Adrenal gland (tissue), 19 donors: ENCODE measurements at regions of chr7 and their contacts with region 1.

Region 1: GRCh38 chr7:15709978-15710377 is 23.5 kb upstream of the MEOX2 start:
- DNase-seq: no peak
- H3K4me3 ChIP-seq: no peak overlapping the region
- H3K27ac ChIP-seq: no peak overlapping the region
- H3K4me1 ChIP-seq: no peaks in the 10 kb centered on the region
- H3K27me3 ChIP-seq: no peaks in the 10 kb centered on the region
- CTCF ChIP-seq: no peak
- POLR2A ChIP-seq: no peak

Region 2: DNA sequence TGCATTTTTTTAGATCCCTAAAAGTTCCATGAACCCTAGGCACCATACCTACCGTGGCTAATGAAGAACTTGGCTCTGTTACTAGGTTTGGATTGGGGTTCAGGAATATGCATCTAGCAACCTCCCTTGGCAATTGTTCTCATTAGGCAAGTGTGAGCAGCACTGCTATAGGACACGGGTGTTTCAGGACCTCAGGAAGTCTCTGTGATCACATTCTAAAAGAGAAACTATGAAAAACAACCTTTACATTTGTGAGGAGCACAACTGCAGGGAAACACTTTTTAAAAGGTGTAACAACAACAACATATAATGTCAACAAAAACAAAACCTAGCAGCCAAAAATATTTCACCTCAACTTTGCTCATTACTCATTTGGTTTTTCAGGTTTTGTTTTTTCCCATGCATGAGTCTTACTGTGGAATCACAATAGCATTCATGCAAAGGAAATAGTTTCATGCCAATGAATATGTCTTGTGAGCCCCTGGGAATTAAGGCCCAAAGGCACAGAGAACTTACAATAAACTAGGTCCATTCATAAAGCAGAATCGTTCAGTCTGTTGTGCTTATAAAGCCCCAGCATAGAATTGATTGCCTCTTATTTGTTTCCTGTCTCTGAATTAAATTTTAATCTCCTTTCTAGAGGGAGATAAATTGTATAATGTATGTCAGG is 551.7 kb before region 1 on chr7:
- intact Hi-C with region 1: no loop called
- DNase-seq: no peak
- H3K4me3 ChIP-seq: no peak overlapping the region
- H3K27ac ChIP-seq: no peak overlapping the region
- H3K4me1 ChIP-seq: no peaks in the 10 kb centered on the region
- H3K27me3 ChIP-seq: no peaks in the 10 kb centered on the region
- CTCF ChIP-seq: no peak
- POLR2A ChIP-seq: no peak

Region 3: GRCh38 chr7:16071246-16071857 is 361.4 kb after region 1 on chr7:
- intact Hi-C with region 1: loop called in 1 of 2 experiments (anchors 10 kb)
- DNase-seq: peak in 2 of 7 donors; percentile 7 to 11
- H3K4me3 ChIP-seq: no peak overlapping the region
- H3K27ac ChIP-seq: no peak overlapping the region
- H3K4me1 ChIP-seq: no peaks in the 10 kb centered on the region
- H3K27me3 ChIP-seq: no peaks in the 10 kb centered on the region
- CTCF ChIP-seq: peak; percentile 72 to 92 (median 88)
- POLR2A ChIP-seq: no peak